ENCODE measurements at regions of chr21 and their contacts with region 1.

Region 1: GRCh38 chr21:26715878-26716506 is 129.2 kb downstream of the ADAMTS1 start:
- DNase-seq: peak; percentile 25 to 33
- H3K4me3 ChIP-seq: no peak overlapping the region
- H3K27ac ChIP-seq: no peak overlapping the region
- H3K4me1 ChIP-seq: peaks cover 0 to 4% of the 10 kb centered on the region in 2 donors
- H3K27me3 ChIP-seq: no peaks in the 10 kb centered on the region
- CTCF ChIP-seq: peak; percentile 36 to 57 (median 48)
- POLR2A ChIP-seq: no peak

Region 2: DNA sequence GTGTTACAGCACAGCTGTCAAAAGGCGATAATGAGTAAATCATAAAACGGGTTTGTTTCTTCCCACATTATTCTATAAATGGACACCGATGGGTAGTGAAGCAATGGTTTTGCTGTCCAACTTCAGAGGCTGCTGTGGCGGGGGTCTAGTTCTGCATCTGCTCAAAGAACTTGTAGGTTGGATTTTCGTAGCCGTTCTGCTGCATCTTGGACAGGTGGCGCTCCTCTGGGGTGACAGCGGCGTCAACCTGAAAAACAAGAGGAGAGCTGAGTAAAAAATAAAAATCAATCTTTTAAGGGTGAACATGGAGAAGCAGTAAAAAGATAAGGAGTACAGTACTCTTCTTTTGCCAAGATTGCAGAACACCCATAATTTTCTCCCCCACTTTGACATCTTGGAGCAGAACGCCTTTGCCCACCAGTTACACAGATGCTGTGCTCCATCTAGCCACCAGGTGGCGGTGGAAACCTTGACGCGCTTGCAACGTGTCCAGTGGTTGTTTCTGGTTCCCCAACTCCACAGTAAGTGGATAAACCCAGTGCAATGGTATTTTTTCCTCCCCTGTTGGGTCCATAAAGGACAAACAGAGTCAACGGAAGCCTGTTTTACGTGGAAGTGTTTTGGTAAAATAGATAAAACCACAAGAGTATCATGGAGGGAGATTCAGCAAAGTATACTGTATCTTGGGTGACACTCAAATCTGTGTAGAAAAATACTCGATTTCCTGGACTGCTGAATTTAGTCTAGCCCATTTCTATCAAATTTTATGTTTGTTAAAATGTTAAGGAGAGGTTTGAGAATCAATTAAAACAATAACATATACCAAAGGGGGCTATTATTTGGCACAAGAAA is 834.2 kb before region 1 on chr21:
- intact Hi-C with region 1: loop called (anchors 10 kb)
- DNase-seq: peak; percentile 64 to 65
- H3K4me3 ChIP-seq: no peak overlapping the region
- H3K27ac ChIP-seq: no peak overlapping the region
- H3K4me1 ChIP-seq: no peaks in the 10 kb centered on the region
- H3K27me3 ChIP-seq: no peaks in the 10 kb centered on the region
- CTCF ChIP-seq: peak; percentile 81 to 94 (median 84)
- POLR2A ChIP-seq: no peak

Region 3: GRCh38 chr21:26776310-26777021 is 60.5 kb after region 1 on chr21:
- intact Hi-C with region 1: no loop called
- DNase-seq: no peak
- H3K4me3 ChIP-seq: no peak overlapping the region
- H3K27ac ChIP-seq: no peak overlapping the region
- H3K4me1 ChIP-seq: no peaks in the 10 kb centered on the region
- H3K27me3 ChIP-seq: no peaks in the 10 kb centered on the region
- CTCF ChIP-seq: no peak
- POLR2A ChIP-seq: no peak

Measured in uterus (tissue), 4 donors.